Activated CD4-positive, alpha-beta T cell treated with anti-CD3 and anti-CD28 coated beads, Interleukin-2, amount 10 ng/mL, durations not matched to agents 24 days and 14 days (primary cell): ENCODE measurements at regions of chr6 and their contacts with region 1.

Region 1: GRCh38 chr6:148440877-148441453 is 98.3 kb downstream of the SASH1 start:
- DNase-seq: no peak
- H3K4me3 Mint-ChIP-seq: no peak overlapping the region
- H3K27ac Mint-ChIP-seq: peak overlapping the region; percentile 27
- H3K4me1 Mint-ChIP-seq: peaks cover 10% of the 10 kb centered on the region
- H3K27me3 Mint-ChIP-seq: peaks cover 22% of the 10 kb centered on the region

Region 2: GRCh38 chr6:148001844-148002642 is 438.9 kb before region 1 on chr6:
- intact Hi-C with region 1: no loop called
- DNase-seq: no peak
- H3K4me3 Mint-ChIP-seq: no peak overlapping the region
- H3K27ac Mint-ChIP-seq: no peak overlapping the region
- H3K4me1 Mint-ChIP-seq: no peaks in the 10 kb centered on the region
- H3K27me3 Mint-ChIP-seq: no peaks in the 10 kb centered on the region

Region 3: DNA sequence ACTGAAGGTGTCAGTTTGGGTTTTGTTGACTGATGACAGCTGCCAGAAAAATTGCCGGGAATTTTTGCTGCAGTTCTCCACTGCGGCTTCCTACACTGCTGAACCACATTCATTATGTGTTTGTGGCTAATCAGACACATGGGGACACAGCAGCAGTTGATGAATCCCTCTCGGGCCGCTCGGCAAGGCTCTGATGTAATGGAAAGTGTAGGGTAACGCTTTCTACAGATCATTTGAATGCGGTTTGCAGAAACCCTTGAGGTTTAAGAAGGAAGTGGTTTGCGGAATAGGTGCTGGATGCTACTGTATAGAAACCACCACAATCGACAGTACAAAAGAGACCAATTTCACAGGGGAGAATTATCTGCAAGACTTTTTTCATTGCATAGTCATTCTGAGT is 237.0 kb before region 1 on chr6:
- intact Hi-C with region 1: loop called (anchors 1 kb)
- DNase-seq: peak; percentile 93
- H3K4me3 Mint-ChIP-seq: peak overlapping the region; percentile 44
- H3K27ac Mint-ChIP-seq: peak overlapping the region; percentile 88
- H3K4me1 Mint-ChIP-seq: peaks cover 17% of the 10 kb centered on the region
- H3K27me3 Mint-ChIP-seq: peaks cover 72% of the 10 kb centered on the region

Region 4: GRCh38 chr6:148451690-148452089 is 10.7 kb after region 1 on chr6:
- intact Hi-C with region 1: loop called (anchors 1 kb)
- DNase-seq: peak; percentile 86
- H3K4me3 Mint-ChIP-seq: peak overlapping the region; percentile 61
- H3K27ac Mint-ChIP-seq: peak overlapping the region; percentile 58
- H3K4me1 Mint-ChIP-seq: peaks cover 20% of the 10 kb centered on the region
- H3K27me3 Mint-ChIP-seq: peaks cover 40% of the 10 kb centered on the region